Mammary epithelial cell (primary cell): ENCODE measurements at regions of chr17 and their contacts with region 1.

Region 1: GRCh38 chr17:41695954-41696756 is 7.5 kb downstream of the EIF1 start:
- DNase-seq: peak; percentile 58
- H3K4me3 ChIP-seq: no peak overlapping the region
- H3K27ac ChIP-seq: no peak overlapping the region
- H3K4me1 ChIP-seq: peaks cover 2% of the 10 kb centered on the region
- H3K27me3 ChIP-seq: no peaks in the 10 kb centered on the region
- CTCF ChIP-seq: peak; percentile 80 to 89

Region 2: GRCh38 chr17:41717408-41718286 is 21.5 kb after region 1 on chr17:
- CTCF ChIA-PET with region 1: interaction called, 6 read pairs
- dilution Hi-C with region 1: no loop called
- in situ Hi-C with region 1: no loop called
- intact Hi-C with region 1: loop called (anchors 1 kb)
- DNase-seq: peak; percentile 85
- H3K4me3 ChIP-seq: peak overlapping the region in 2 of 3 experiments; percentile 2 to 6
- H3K27ac ChIP-seq: peak overlapping the region; percentile 67
- H3K4me1 ChIP-seq: peaks cover 16% of the 10 kb centered on the region
- H3K27me3 ChIP-seq: no peaks in the 10 kb centered on the region
- CTCF ChIP-seq: no peak

Region 3: GRCh38 chr17:41801374-41802271 is 105.5 kb after region 1 on chr17:
- CTCF ChIA-PET with region 1: no interaction called
- dilution Hi-C with region 1: no loop called
- in situ Hi-C with region 1: no loop called
- intact Hi-C with region 1: loop called (anchors 2 kb)
- DNase-seq: peak; percentile 76
- H3K4me3 ChIP-seq: peak overlapping the region in 1 of 3 experiments; percentile 22
- H3K27ac ChIP-seq: peak overlapping the region; percentile 93
- H3K4me1 ChIP-seq: peaks cover 23% of the 10 kb centered on the region
- H3K27me3 ChIP-seq: no peaks in the 10 kb centered on the region
- CTCF ChIP-seq: peak; percentile 96 to 98